CD8-positive, alpha-beta T cell (primary cell): ENCODE measurements at regions of chr17 and their contacts with region 1.

Region 1: GRCh38 chr17:61593426-61593825 is 2.4 kb upstream of the NACA2 start:
- DNase-seq: no peak
- ATAC-seq: no peak
- H3K4me3 ChIP-seq: no peak overlapping the region
- H3K4me3 Mint-ChIP-seq: no peak overlapping the region
- H3K27ac ChIP-seq: no peak overlapping the region
- H3K27ac Mint-ChIP-seq: no peak overlapping the region
- H3K4me1 ChIP-seq: no peaks in the 10 kb centered on the region
- H3K4me1 Mint-ChIP-seq: no peaks in the 10 kb centered on the region
- H3K27me3 ChIP-seq: peaks cover 0 to 4% of the 10 kb centered on the region in 2 experiments
- H3K27me3 Mint-ChIP-seq: peaks cover 8% of the 10 kb centered on the region
- CTCF ChIP-seq: no peak

Region 2: GRCh38 chr17:61545335-61545938 is 48.0 kb before region 1 on chr17:
- CTCF ChIA-PET with region 1: no interaction called
- POLR2A ChIA-PET with region 1: no interaction called
- intact Hi-C with region 1: loop called in 1 of 2 experiments (anchors 5 kb)
- DNase-seq: no peak
- ATAC-seq: no peak
- H3K4me3 ChIP-seq: no peak overlapping the region
- H3K4me3 Mint-ChIP-seq: no peak overlapping the region
- H3K27ac ChIP-seq: no peak overlapping the region
- H3K27ac Mint-ChIP-seq: no peak overlapping the region
- H3K4me1 ChIP-seq: no peaks in the 10 kb centered on the region
- H3K4me1 Mint-ChIP-seq: no peaks in the 10 kb centered on the region
- H3K27me3 ChIP-seq: peaks cover 0 to 8% of the 10 kb centered on the region in 2 experiments
- H3K27me3 Mint-ChIP-seq: peaks cover 34% of the 10 kb centered on the region
- CTCF ChIP-seq: no peak